K562 (cell line): ENCODE measurements at regions of chr5 and their contacts with region 1.

Region 1: GRCh38 chr5:40736103-40736875 is 19.5 kb downstream of the TTC33 start:
- DNase-seq: peak; percentile 55 to 73 (median 62)
- ATAC-seq: peak; percentile 92
- H3K4me3 ChIP-seq: no peak overlapping the region
- H3K27ac ChIP-seq: no peak overlapping the region
- H3K4me1 ChIP-seq: peaks cover 0 to 7% of the 10 kb centered on the region in 2 experiments; a peak in 2 of 5 replicates
- H3K27me3 ChIP-seq: no peaks in the 10 kb centered on the region
- CTCF ChIP-seq: peak; percentile 57 to 87 (median 65); a peak in 5 of 6 replicates
- EP300 ChIP-seq: no peak
- POLR2A ChIP-seq: no peak
- RAD21 ChIP-seq: peak; percentile 73 to 86

Region 2: GRCh38 chr5:39578887-39579497 is 1157.3 kb before region 1 on chr5:
- CTCF ChIA-PET with region 1: interaction called, 6 read pairs
- POLR2A ChIA-PET with region 1: no interaction called
- in situ Hi-C with region 1: no loop called
- intact Hi-C with region 1: loop called (anchors 5 kb)
- DNase-seq: peak in 1 of 4 experiments; percentile 25
- ATAC-seq: no peak
- H3K4me3 ChIP-seq: no peak overlapping the region
- H3K27ac ChIP-seq: no peak overlapping the region
- H3K4me1 ChIP-seq: no peaks in the 10 kb centered on the region
- H3K27me3 ChIP-seq: no peaks in the 10 kb centered on the region
- CTCF ChIP-seq: peak in 2 of 3 experiments; percentile 21 to 73; a peak in 3 of 6 replicates
- EP300 ChIP-seq: no peak
- POLR2A ChIP-seq: no peak
- RAD21 ChIP-seq: peak; percentile 73 to 75

Region 3: GRCh38 chr5:40112875-40113274 is 623.4 kb before region 1 on chr5:
- CTCF ChIA-PET with region 1: no interaction called
- POLR2A ChIA-PET with region 1: no interaction called
- in situ Hi-C with region 1: no loop called
- intact Hi-C with region 1: no loop called
- DNase-seq: no peak
- ATAC-seq: no peak
- H3K4me3 ChIP-seq: no peak overlapping the region
- H3K27ac ChIP-seq: no peak overlapping the region
- H3K4me1 ChIP-seq: no peaks in the 10 kb centered on the region
- H3K27me3 ChIP-seq: no peaks in the 10 kb centered on the region
- CTCF ChIP-seq: no peak
- EP300 ChIP-seq: no peak
- POLR2A ChIP-seq: no peak
- RAD21 ChIP-seq: no peak